ENCODE measurements at regions of chr12 and their contacts with region 1.

Region 1: GRCh38 chr12:80472902-80473500 is 29.0 kb downstream of the PTPRQ start:
- DNase-seq: peak; percentile 53
- ATAC-seq: peak; percentile 58; the same call in 1 of the 2 replicates
- H3K4me3 ChIP-seq: no peak overlapping the region
- H3K27ac ChIP-seq: no peak overlapping the region
- H3K4me1 ChIP-seq: no peaks in the 10 kb centered on the region
- H3K27me3 ChIP-seq: no peaks in the 10 kb centered on the region
- CTCF ChIP-seq: peak; percentile 56 to 72 (median 68); a peak in 4 of 6 replicates
- POLR2A ChIP-seq: no peak
- RAD21 ChIP-seq: peak; percentile 68

Region 2: GRCh38 chr12:80456513-80456912 is 16.5 kb before region 1 on chr12:
- CTCF ChIA-PET with region 1: no interaction called
- POLR2A ChIA-PET with region 1: no interaction called
- RAD21 ChIA-PET with region 1: no interaction called
- intact Hi-C with region 1: no loop called
- DNase-seq: no peak
- ATAC-seq: no peak
- H3K4me3 ChIP-seq: no peak overlapping the region
- H3K27ac ChIP-seq: no peak overlapping the region
- H3K4me1 ChIP-seq: no peaks in the 10 kb centered on the region
- H3K27me3 ChIP-seq: no peaks in the 10 kb centered on the region
- CTCF ChIP-seq: no peak
- POLR2A ChIP-seq: no peak
- RAD21 ChIP-seq: no peak

Region 3: GRCh38 chr12:80598004-80598606 is 125.1 kb after region 1 on chr12:
- CTCF ChIA-PET with region 1: no interaction called
- POLR2A ChIA-PET with region 1: no interaction called
- RAD21 ChIA-PET with region 1: interaction called in 1 of 2 experiments, 3 read pairs
- intact Hi-C with region 1: loop called (anchors 5 kb)
- DNase-seq: peak; percentile 16
- ATAC-seq: peak; percentile 65
- H3K4me3 ChIP-seq: no peak overlapping the region
- H3K27ac ChIP-seq: no peak overlapping the region
- H3K4me1 ChIP-seq: no peaks in the 10 kb centered on the region
- H3K27me3 ChIP-seq: no peaks in the 10 kb centered on the region
- CTCF ChIP-seq: peak; percentile 26 to 46 (median 38); a peak in 4 of 6 replicates
- POLR2A ChIP-seq: no peak
- RAD21 ChIP-seq: peak; percentile 36; the same call in 1 of the 2 replicates

Region 4: DNA sequence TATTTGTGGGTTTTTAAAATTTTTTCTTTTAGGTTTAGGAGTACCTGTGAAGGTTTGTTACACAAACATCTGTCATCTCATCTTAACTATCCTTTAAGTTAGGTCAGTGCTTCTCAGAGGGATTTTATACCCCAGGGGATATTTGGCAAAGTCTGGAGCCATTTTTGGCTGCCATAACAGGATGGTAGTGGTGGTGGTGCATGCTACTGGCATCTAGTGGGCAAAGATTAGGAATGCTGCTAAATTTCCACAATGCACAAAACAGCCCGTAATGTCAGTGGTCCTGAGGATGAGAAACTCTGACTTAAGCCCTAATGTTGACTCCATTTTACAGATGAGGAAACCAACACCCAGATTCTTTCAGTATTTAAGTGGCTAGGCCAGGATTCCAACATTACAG is 149.3 kb after region 1 on chr12:
- CTCF ChIA-PET with region 1: no interaction called
- POLR2A ChIA-PET with region 1: no interaction called
- RAD21 ChIA-PET with region 1: no interaction called
- intact Hi-C with region 1: loop called (anchors 5 kb)
- DNase-seq: no peak
- ATAC-seq: peak; percentile 72
- H3K4me3 ChIP-seq: no peak overlapping the region
- H3K27ac ChIP-seq: no peak overlapping the region
- H3K4me1 ChIP-seq: no peaks in the 10 kb centered on the region; a peak in 1 of 4 replicates
- H3K27me3 ChIP-seq: no peaks in the 10 kb centered on the region
- CTCF ChIP-seq: peak; percentile 30 to 56 (median 50); a peak in 5 of 6 replicates
- POLR2A ChIP-seq: no peak
- RAD21 ChIP-seq: peak; percentile 49

Region 5: GRCh38 chr12:80763874-80764273 is 290.9 kb after region 1 on chr12:
- CTCF ChIA-PET with region 1: no interaction called
- POLR2A ChIA-PET with region 1: no interaction called
- RAD21 ChIA-PET with region 1: no interaction called
- intact Hi-C with region 1: loop called (anchors 2 kb)
- DNase-seq: peak; percentile 39
- ATAC-seq: no peak
- H3K4me3 ChIP-seq: no peak overlapping the region
- H3K27ac ChIP-seq: no peak overlapping the region
- H3K4me1 ChIP-seq: no peaks in the 10 kb centered on the region
- H3K27me3 ChIP-seq: peaks cover 4% of the 10 kb centered on the region; the same call in 1 of the 2 replicates
- CTCF ChIP-seq: peak; percentile 41 to 62 (median 60); a peak in 5 of 6 replicates
- POLR2A ChIP-seq: no peak
- RAD21 ChIP-seq: peak; percentile 64

Region 6: GRCh38 chr12:80946594-80946993 is 473.6 kb after region 1 on chr12:
- CTCF ChIA-PET with region 1: no interaction called
- POLR2A ChIA-PET with region 1: no interaction called
- RAD21 ChIA-PET with region 1: no interaction called
- intact Hi-C with region 1: loop called (anchors 10 kb)
- DNase-seq: no peak
- ATAC-seq: no peak
- H3K4me3 ChIP-seq: no peak overlapping the region
- H3K27ac ChIP-seq: no peak overlapping the region
- H3K4me1 ChIP-seq: no peaks in the 10 kb centered on the region
- H3K27me3 ChIP-seq: no peaks in the 10 kb centered on the region
- CTCF ChIP-seq: peak in 1 of 3 experiments; percentile 18; a peak in 3 of 6 replicates
- POLR2A ChIP-seq: no peak
- RAD21 ChIP-seq: peak; percentile 30; the same call in 1 of the 2 replicates

Measured in HCT116 (cell line).